GM12878 (cell line): ENCODE measurements at regions of chr3 and their contacts with region 1.

Region 1: DNA sequence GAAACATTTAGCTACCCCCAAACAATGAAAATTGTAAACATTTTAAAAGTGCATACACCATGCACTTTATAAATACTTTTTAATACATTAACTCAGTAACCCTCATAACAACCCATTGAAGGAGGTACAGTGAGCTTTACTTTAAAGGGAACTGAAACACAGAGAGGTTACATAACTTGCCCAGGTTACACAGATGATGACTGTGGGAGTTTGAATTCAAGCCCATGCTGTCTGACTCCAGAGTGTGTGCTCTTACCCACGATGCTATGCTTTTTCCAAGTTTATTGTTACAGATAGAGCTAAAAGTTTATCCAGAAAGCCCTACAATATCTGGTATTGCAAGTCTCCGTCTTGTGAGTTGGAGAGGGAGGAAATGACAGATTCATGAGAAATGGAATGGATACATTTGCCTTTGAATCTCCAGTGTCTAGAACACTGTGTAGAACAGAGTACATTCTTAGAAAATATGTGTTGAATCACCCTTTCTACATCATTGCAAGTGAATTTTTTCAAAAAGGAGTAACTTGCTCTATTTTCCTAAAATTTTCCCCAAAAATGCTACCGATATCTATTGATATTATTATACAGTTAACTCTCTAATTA is 428.3 kb downstream of the NAALADL2 start:
- DNase-seq: peak; percentile 54
- ATAC-seq: peak; percentile 100
- H3K4me3 ChIP-seq: no peak overlapping the region
- H3K27ac ChIP-seq: no peak overlapping the region
- H3K4me1 ChIP-seq: no peaks in the 10 kb centered on the region
- H3K27me3 ChIP-seq: no peaks in the 10 kb centered on the region
- CTCF ChIP-seq: no peak
- EP300 ChIP-seq: peak in 1 of 2 experiments; percentile 32; a peak in 1 of 4 replicates
- POLR2A ChIP-seq: no peak
- RAD21 ChIP-seq: no peak

Region 2: DNA sequence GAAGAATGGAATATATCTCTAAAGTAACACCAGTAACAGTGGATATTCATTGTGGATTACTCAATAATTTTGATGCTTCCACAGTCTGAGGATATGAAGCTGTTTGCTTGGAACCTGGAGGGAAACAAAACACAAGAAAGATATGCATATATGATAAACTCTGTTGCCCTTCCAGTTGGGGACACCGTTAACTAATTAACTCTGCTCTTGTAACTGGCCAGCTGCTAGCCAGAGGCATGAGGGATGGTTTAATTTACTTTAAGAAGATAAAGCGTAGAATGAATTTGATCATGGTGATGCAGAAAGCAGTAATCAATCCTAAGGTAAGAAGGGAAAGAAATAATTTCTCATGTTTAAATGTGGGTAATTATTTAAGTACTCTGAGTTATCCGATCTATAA is 14.3 kb after region 1 on chr3:
- CTCF ChIA-PET with region 1: interaction called, 6 read pairs
- POLR2A ChIA-PET with region 1: interaction called, 3 read pairs
- RAD21 ChIA-PET with region 1: interaction called, 4 read pairs
- SMC1A ChIA-PET with region 1: interaction called, 12 read pairs
- in situ Hi-C with region 1: no loop called
- intact Hi-C with region 1: no loop called
- DNase-seq: no peak
- ATAC-seq: no peak
- H3K4me3 ChIP-seq: no peak overlapping the region
- H3K27ac ChIP-seq: no peak overlapping the region
- H3K4me1 ChIP-seq: no peaks in the 10 kb centered on the region
- H3K27me3 ChIP-seq: no peaks in the 10 kb centered on the region
- CTCF ChIP-seq: no peak
- EP300 ChIP-seq: no peak
- POLR2A ChIP-seq: no peak
- RAD21 ChIP-seq: no peak

Region 3: DNA sequence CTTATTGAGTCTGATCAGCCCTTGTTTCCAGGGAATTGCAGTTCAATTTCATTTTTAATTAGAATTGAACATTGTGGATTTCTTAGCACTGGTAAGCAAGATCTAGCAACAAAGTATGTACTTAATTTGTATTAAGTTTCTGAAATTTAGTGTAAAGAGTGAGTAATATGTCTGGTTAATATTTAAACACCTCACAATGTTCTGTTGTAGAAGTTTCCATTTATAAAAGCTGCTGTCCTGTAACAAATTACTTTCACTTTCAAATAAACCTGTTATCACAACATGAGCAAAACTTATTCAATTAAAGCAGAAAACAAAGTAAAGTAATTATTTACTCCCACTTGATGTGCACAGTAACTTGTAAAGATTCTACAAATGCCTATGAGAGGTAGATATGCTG is 20.2 kb after region 1 on chr3:
- CTCF ChIA-PET with region 1: interaction called, 5 read pairs
- POLR2A ChIA-PET with region 1: no interaction called
- RAD21 ChIA-PET with region 1: interaction called, 16 read pairs
- SMC1A ChIA-PET with region 1: interaction called, 12 read pairs
- in situ Hi-C with region 1: no loop called
- intact Hi-C with region 1: no loop called
- DNase-seq: no peak
- ATAC-seq: peak; percentile 88
- H3K4me3 ChIP-seq: no peak overlapping the region
- H3K27ac ChIP-seq: no peak overlapping the region
- H3K4me1 ChIP-seq: no peaks in the 10 kb centered on the region
- H3K27me3 ChIP-seq: no peaks in the 10 kb centered on the region
- CTCF ChIP-seq: no peak
- EP300 ChIP-seq: 0 out of 4 replicates have a peak, but pooled peaks of 1 of the 2 experiments have one; percentile 32
- POLR2A ChIP-seq: no peak
- RAD21 ChIP-seq: no peak

Region 4: DNA sequence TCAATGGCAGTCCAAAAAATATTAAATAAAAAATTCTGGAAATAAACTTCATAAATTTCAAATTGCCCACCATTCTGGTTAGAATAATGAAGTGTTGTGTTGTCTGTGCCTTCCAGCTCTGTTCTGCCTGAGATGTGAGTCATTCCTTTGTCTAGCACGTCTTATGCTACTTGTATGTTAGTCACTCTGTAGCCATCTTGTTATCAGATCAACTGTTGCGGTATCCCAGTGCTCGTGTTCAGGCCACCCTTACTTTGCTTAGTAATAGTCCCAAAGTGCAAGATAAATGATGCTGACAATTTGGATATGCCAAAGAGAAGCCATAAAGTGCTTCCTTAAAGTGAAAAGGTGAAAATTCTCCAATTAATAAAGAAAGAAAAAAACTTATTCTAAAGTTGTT is 99.2 kb after region 1 on chr3:
- CTCF ChIA-PET with region 1: no interaction called
- POLR2A ChIA-PET with region 1: no interaction called
- RAD21 ChIA-PET with region 1: no interaction called
- SMC1A ChIA-PET with region 1: no interaction called
- in situ Hi-C with region 1: no loop called
- intact Hi-C with region 1: no loop called
- DNase-seq: no peak
- ATAC-seq: no peak; the same call in 2 of the 3 replicates
- H3K4me3 ChIP-seq: no peak overlapping the region
- H3K27ac ChIP-seq: no peak overlapping the region
- H3K4me1 ChIP-seq: no peaks in the 10 kb centered on the region
- H3K27me3 ChIP-seq: no peaks in the 10 kb centered on the region
- CTCF ChIP-seq: no peak
- EP300 ChIP-seq: no peak
- POLR2A ChIP-seq: no peak
- RAD21 ChIP-seq: no peak